Posterior vena cava (tissue), 2 donors: ENCODE measurements at regions of chr2 and their contacts with region 1.

Region 1: GRCh38 chr2:5530011-5530696 is 162.0 kb upstream of the SOX11 start:
- DNase-seq: no peak

Region 2: DNA sequence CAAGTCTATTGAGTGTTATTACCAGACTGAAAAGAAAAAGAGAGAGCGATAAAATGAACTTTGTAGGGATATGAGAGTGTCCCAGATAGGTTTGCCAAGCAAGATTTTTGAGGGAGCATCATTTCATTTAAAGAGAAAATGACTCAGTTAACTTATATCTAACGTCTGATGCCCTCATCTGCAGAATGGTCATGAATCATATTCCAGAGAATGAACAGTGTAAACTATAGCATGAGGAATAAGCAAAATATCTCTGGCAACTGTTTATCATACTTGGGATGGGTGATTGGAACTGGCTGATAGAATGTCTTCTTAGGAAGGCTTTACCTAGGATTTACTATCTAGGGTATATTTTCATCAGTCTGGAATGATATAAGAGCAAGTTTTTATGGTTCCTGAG is 1046.1 kb after region 1 on chr2:
- intact Hi-C with region 1: loop called in 1 of 2 experiments (anchors 5 kb)
- DNase-seq: no peak